MCF 10A (cell line): ENCODE measurements at regions of chr2 and their contacts with region 1.

Region 1: DNA sequence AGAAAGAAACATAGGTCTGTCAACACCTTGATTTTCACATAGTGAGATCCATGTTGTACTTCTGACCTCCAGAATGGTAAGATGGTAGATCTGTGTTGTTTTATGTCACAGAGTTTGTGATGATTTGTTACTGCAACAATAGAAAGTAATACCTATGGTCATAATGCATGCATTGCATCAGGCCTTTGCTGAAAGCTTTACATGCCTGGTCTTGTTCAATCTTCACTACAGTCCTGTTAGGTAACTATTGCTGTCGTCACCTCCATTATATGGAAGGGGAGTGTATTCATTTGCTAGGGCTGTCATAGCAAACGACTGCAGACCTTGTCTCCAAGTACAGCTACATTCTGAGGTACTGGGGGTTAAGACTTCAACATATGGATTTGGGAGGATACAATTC is 243.5 kb downstream of the ANAPC1 start:
- DNase-seq: peak; percentile 92
- H3K4me3 Mint-ChIP-seq: no peak overlapping the region
- H3K27ac Mint-ChIP-seq: peak overlapping the region; percentile 5
- H3K4me1 Mint-ChIP-seq: peaks cover 12% of the 10 kb centered on the region
- H3K27me3 Mint-ChIP-seq: no peaks in the 10 kb centered on the region
- CTCF ChIP-seq: no peak

Region 2: DNA sequence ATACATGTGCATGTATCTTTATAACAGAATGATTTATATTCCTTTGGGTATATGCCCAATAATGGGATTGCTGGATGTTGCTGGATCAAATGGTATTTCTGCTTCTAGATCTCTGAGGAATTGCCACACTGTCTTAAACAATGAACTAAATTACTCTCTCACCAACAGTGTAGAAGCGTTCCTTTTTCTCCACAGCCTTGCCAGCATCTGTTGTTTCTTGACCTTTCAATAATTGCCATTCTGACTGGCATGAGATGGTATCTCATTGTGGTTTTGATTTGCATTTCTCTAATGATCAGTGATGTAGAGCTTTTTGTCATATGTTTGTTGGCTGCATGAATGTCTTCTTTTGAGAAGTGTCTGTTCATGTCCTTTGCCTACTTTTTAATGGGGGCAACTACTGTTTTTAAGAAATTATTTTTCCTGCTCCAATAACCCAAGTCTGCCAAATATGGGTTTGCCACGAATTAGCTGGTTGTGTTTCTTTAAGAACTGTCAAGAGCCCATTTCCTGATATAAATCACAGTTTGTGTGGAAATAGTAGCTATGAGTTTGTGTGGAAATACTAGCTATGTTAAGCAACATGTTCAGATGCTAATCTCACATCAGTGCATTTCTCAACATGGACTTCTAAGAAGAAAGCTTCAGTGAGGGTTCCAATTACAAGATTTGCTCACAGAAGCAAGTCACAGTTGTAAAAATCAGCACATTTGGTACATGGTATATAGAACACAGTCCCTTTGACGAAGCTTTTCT is 15.9 kb before region 1 on chr2:
- CTCF ChIA-PET with region 1: interaction called, 4 read pairs
- POLR2A ChIA-PET with region 1: interaction called, 22 read pairs
- intact Hi-C with region 1: no loop called
- DNase-seq: peak; percentile 90
- H3K4me3 Mint-ChIP-seq: peak overlapping the region; percentile 38
- H3K27ac Mint-ChIP-seq: peak overlapping the region; percentile 70
- H3K4me1 Mint-ChIP-seq: peaks cover 44% of the 10 kb centered on the region
- H3K27me3 Mint-ChIP-seq: no peaks in the 10 kb centered on the region
- CTCF ChIP-seq: no peak

Region 3: GRCh38 chr2:113309655-113310387 is 1669.3 kb after region 1 on chr2:
- CTCF ChIA-PET with region 1: no interaction called
- POLR2A ChIA-PET with region 1: no interaction called
- intact Hi-C with region 1: no loop called
- DNase-seq: peak; percentile 64
- H3K4me3 Mint-ChIP-seq: no peak overlapping the region
- H3K27ac Mint-ChIP-seq: peak overlapping the region; percentile 72
- H3K4me1 Mint-ChIP-seq: peaks cover 31% of the 10 kb centered on the region
- H3K27me3 Mint-ChIP-seq: no peaks in the 10 kb centered on the region
- CTCF ChIP-seq: no peak